HEK293T (cell line): ENCODE measurements at regions of chr6 and their contacts with region 1.

Region 1: GRCh38 chr6:134097114-134097707 is 44.8 kb upstream of the SLC2A12 start:
- DNase-seq: peak; percentile 76

Region 2: DNA sequence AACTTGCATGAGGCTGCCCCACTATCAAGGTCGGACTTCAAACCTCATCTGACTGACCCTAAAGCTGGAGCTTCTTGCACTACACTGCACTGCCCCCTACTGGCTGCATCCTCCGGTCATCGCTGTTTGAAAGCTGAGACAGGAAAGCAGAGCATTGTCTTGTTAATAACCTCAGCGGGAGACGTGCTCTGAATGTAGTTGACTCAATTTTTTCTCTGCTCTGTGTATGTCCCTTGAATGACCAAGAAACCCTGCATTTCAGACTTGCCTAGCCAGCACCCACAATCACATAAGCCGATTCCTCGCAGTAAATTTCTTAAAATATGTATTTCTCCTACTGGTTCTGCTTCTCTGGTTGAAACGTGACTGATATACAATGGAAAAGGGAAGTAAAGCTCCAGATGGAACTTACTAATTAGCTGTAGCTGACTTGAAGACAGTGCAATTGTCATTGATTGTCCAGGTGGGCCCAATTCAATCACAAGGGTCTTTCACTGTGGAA is 180.5 kb before region 1 on chr6:
- CTCF ChIA-PET with region 1: interaction called, 129 read pairs
- POLR2A ChIA-PET with region 1: no interaction called
- DNase-seq: peak; percentile 81

Region 3: GRCh38 chr6:133973109-133973971 is 123.9 kb before region 1 on chr6:
- CTCF ChIA-PET with region 1: interaction called, 15 read pairs
- POLR2A ChIA-PET with region 1: no interaction called
- DNase-seq: peak; percentile 42

Region 4: DNA sequence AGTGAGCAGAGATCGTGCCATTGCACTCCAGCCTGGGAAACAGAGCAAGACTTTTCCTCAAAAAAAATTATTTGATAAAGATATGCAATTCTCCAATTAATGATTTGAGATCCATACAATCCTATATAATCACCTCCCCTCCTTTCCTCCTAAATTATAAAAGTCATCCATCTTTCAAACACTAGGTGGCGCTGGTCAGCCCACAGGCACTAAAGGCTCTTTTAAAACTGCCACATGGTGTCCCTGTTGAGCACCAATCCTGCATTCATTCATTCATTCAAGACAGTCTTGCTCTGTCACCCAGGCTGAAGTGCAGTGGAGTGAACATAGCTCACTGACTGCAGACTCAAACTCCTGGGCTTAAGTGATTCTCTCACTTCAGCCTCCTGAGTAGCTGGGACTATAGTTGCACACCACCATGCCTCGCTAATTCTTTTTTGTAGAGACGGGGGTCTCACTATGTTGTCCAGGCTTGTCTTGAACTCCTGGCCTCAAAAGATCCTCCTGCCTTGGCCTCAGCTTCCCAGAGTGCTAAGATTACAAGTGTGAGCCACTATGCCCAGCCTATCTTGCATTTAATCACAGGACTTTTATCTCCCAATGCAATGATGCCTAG is 14.0 kb after region 1 on chr6:
- CTCF ChIA-PET with region 1: interaction called, 11 read pairs
- POLR2A ChIA-PET with region 1: no interaction called
- DNase-seq: peak; percentile 77

Region 5: GRCh38 chr6:134247231-134247833 is 150.1 kb after region 1 on chr6:
- CTCF ChIA-PET with region 1: no interaction called
- POLR2A ChIA-PET with region 1: no interaction called
- DNase-seq: no peak